PC-3 (cell line): ENCODE measurements at regions of chr10 and their contacts with region 1.

Region 1: DNA sequence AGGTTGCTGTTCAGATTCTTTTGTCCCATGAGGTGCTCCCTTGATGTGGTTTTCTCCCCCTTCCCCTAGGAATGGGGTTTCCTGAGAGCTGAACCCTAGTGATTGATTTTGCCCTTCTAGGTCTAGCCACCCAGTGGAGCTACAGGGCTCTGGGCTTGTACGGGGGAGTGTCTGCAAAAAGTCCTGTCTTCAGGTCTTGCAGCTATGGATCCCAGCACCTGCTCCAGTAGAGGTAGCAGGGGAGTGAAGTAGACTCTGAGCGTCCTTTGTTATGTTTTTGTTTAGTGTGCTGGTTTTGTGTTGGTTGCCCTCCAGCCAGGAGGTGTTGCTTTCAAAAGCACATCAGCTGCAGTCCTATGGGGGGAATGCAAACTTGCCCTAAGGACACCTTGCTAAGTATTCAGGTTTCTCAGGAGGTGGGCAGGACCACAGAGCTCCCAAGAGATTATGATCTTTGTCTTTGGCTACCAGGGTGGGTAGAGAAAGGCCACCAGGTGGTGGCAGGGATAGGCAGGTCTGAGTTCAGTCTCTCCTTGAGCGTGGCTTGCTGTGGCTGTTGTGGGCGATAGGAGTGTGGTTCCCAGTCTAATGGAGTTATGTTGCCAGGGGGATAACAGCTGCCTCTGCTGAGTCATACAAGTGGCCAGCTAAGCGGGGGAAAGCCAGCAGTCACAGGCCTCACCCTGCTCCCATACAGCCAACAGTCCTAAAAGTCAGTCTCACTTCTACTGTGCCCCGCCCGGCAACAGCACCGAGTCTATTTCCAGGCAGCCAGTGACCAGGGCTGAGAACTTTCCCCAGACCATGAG is 92.4 kb upstream of the JCAD start:
- DNase-seq: peak; percentile 69
- ATAC-seq: peak; percentile 76
- H3K4me3 ChIP-seq: no peak overlapping the region
- H3K27ac ChIP-seq: no peak overlapping the region
- H3K4me1 ChIP-seq: no peaks in the 10 kb centered on the region
- H3K27me3 ChIP-seq: no peaks in the 10 kb centered on the region
- CTCF ChIP-seq: no peak

Region 2: DNA sequence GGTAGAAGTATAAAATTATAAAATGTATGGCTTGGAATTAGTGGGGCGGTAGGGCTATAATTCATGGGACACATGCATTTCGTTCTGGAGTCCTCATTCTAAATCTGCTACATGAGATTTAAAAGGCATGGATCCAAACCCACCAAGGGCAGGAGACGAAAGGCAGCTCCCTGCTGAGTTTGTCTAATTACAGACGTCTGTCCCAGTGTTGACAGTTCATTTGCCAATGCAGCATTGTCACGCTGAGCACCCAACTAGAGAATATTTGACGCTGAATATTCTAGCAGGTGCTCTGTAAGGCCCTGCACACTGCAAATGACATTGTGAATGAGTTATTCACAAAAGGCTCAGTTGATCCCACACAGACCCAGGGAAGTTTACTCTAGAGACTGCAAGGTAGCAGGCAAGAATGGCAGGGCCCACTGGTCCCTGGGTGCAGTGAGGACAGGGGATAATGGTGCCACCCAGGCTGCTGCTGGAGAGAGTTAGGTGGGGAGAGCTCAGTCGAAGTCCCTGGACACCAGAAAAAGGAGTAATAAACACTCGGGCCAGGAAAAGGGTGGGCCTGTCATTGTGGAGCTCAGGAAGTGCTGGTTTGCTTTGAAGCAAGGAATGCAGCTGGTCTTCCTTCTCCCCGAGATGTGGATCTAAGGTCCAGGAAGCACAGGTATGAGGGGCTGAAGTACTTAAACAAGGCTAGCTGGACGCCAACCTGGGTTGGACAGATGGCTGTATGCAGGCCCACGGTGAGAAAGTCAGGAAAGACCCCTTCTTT is 17.4 kb before region 1 on chr10:
- CTCF ChIA-PET with region 1: no interaction called
- POLR2A ChIA-PET with region 1: interaction called, 15 read pairs
- intact Hi-C with region 1: no loop called
- DNase-seq: no peak
- ATAC-seq: no peak
- H3K4me3 ChIP-seq: no peak overlapping the region
- H3K27ac ChIP-seq: no peak overlapping the region
- H3K4me1 ChIP-seq: no peaks in the 10 kb centered on the region
- H3K27me3 ChIP-seq: no peaks in the 10 kb centered on the region
- CTCF ChIP-seq: no peak

Region 3: GRCh38 chr10:30231071-30231652 is 79.4 kb after region 1 on chr10:
- CTCF ChIA-PET with region 1: no interaction called
- POLR2A ChIA-PET with region 1: no interaction called
- intact Hi-C with region 1: no loop called
- DNase-seq: no peak
- ATAC-seq: no peak
- H3K4me3 ChIP-seq: no peak overlapping the region
- H3K27ac ChIP-seq: no peak overlapping the region
- H3K4me1 ChIP-seq: no peaks in the 10 kb centered on the region
- H3K27me3 ChIP-seq: no peaks in the 10 kb centered on the region
- CTCF ChIP-seq: no peak

Region 4: GRCh38 chr10:30254926-30255325 is 103.1 kb after region 1 on chr10:
- CTCF ChIA-PET with region 1: no interaction called
- POLR2A ChIA-PET with region 1: no interaction called
- intact Hi-C with region 1: no loop called
- DNase-seq: no peak
- ATAC-seq: no peak
- H3K4me3 ChIP-seq: no peak overlapping the region
- H3K27ac ChIP-seq: no peak overlapping the region
- H3K4me1 ChIP-seq: no peaks in the 10 kb centered on the region
- H3K27me3 ChIP-seq: no peaks in the 10 kb centered on the region
- CTCF ChIP-seq: no peak